AG04450 (cell line): ENCODE measurements at regions of chr6 and their contacts with region 1.

Region 1: GRCh38 chr6:100105138-100105753 is 111.2 kb upstream of the MCHR2 start:
- DNase-seq: no peak
- H3K4me3 ChIP-seq: no peak overlapping the region
- H3K27ac ChIP-seq: no peak overlapping the region
- H3K27me3 ChIP-seq: peaks cover 13% of the 10 kb centered on the region
- CTCF ChIP-seq: no peak

Region 2: DNA sequence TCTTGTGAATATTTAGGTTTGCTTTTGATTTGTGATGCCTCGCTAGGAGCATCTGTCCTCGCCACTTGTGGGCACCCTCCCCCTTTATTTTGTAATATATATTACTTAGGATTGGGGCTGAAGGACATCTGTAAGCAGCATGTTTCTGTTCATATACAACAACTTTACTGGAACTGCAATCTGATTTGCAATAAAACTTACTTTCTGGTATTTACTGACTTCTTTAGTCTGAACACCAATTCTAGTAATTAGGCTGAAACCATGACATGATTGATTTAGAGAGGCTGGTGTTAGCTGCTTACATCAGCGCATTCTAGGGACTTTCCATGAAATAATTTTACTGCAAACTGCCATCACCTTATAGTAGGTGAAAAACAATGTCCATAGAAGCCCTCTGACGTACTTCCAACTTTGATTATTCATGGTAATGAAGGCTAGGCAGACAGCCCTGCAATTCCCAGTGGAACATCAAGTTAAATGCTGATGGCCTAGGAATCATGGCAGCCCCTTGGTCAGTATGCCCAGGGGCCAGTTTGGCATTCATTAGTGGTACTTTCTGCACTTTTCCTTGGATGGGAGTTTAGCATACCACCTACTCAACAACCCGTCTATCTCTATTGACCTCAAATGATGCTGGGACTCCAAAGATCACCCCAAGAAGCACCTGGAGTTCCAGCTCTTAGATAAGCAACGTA is 21.7 kb after region 1 on chr6:
- CTCF ChIA-PET with region 1: interaction called, 12 read pairs
- POLR2A ChIA-PET with region 1: no interaction called
- DNase-seq: no peak
- H3K4me3 ChIP-seq: no peak overlapping the region
- H3K27ac ChIP-seq: no peak overlapping the region
- H3K27me3 ChIP-seq: peaks cover 9% of the 10 kb centered on the region
- CTCF ChIP-seq: no peak

Region 3: GRCh38 chr6:100257793-100258395 is 152.6 kb after region 1 on chr6:
- CTCF ChIA-PET with region 1: no interaction called
- POLR2A ChIA-PET with region 1: no interaction called
- DNase-seq: peak; percentile 15
- H3K4me3 ChIP-seq: peak overlapping the region; percentile 21; the same call in 1 of the 2 replicates
- H3K27ac ChIP-seq: no peak overlapping the region
- H3K27me3 ChIP-seq: no peaks in the 10 kb centered on the region
- CTCF ChIP-seq: peak; percentile 27